Activated CD8-positive, alpha-beta memory T cell treated with anti-CD3 and anti-CD28 coated beads, Interleukin-2, amount 10 ng/mL, durations not matched to agents 7 days and 5 days (primary cell): ENCODE measurements at regions of chr19 and their contacts with region 1.

Region 1: GRCh38 chr19:5803752-5804515 is 933 bp upstream of the NRTN start:
- DNase-seq: peak; percentile 94
- ATAC-seq: peak; percentile 97
- H3K4me3 Mint-ChIP-seq: peak overlapping the region; percentile 64
- H3K27ac Mint-ChIP-seq: no peak overlapping the region
- H3K4me1 Mint-ChIP-seq: peaks cover 19% of the 10 kb centered on the region
- H3K27me3 Mint-ChIP-seq: peaks cover 46% of the 10 kb centered on the region

Region 2: GRCh38 chr19:5690125-5690954 is 113.6 kb before region 1 on chr19 and contains the start of gene RPL36:
- CTCF ChIA-PET with region 1: interaction called, 11 read pairs
- DNase-seq: peak; percentile 99
- ATAC-seq: peak; percentile 63
- H3K4me3 Mint-ChIP-seq: peak within 1 kb of the TSS; percentile 98
- H3K27ac Mint-ChIP-seq: peak within 1 kb of the TSS; percentile 92
- H3K4me1 Mint-ChIP-seq: peaks cover 42% of the 10 kb centered on the region
- H3K27me3 Mint-ChIP-seq: no peaks in the 10 kb centered on the region
- total RNA-seq, gene RPL36: 976 to 1,078 TPM

Region 3: DNA sequence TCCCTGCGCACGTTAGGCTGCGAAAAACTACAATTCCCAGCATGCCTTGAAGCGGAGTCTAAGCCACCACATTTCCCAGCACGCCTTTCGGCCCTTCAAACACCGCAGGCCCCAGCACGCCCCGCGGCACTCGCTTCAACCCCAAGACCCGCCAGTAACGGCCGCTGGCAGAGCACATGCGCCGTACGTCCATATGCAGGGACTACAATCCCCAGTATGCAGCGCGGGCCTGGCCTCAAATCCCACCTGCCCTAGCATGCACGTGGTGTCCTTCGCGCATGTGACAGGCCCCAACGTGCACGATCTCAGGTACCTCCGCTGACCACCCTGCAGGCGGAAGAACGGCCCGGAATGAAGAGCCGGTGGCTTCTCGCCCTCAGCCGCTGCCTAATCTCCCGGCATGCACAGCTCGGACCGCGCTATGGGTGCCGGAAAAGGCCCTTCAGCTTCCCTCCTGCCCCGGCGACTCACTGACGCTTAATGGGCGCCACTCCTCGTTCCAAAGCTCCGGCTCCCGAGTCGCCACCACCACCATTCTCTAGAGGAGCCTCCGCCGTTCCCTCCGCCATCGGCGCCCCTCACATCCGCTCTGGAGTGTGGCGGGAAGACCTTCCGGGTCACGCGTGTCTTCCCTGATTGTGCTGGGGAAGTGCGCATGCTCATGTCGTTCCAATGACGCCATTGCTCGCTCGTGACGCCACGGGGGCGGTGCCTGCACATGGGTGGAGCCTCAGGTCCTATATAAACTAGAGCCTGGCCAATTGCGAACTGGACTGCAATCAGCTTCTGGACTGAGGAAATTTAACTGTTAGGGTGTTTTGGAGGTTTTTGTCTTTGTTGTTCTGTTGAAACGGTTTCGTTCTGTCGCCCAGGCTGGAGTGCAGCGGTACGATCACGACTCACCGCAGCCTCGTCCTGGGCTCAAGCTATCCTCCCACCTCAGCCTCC is 13.1 kb before region 1 on chr19 and contains the start of gene DUS3L:
- CTCF ChIA-PET with region 1: interaction called, 62 read pairs
- DNase-seq: peak; percentile 99
- ATAC-seq: peak; percentile 94
- H3K4me3 Mint-ChIP-seq: peak within 1 kb of the TSS; percentile 89
- H3K27ac Mint-ChIP-seq: peak within 1 kb of the TSS; percentile 99
- H3K4me1 Mint-ChIP-seq: peaks cover 12% of the 10 kb centered on the region
- H3K27me3 Mint-ChIP-seq: no peaks in the 10 kb centered on the region
- total RNA-seq, gene DUS3L: 53.0 to 64.0 TPM

Region 4: DNA sequence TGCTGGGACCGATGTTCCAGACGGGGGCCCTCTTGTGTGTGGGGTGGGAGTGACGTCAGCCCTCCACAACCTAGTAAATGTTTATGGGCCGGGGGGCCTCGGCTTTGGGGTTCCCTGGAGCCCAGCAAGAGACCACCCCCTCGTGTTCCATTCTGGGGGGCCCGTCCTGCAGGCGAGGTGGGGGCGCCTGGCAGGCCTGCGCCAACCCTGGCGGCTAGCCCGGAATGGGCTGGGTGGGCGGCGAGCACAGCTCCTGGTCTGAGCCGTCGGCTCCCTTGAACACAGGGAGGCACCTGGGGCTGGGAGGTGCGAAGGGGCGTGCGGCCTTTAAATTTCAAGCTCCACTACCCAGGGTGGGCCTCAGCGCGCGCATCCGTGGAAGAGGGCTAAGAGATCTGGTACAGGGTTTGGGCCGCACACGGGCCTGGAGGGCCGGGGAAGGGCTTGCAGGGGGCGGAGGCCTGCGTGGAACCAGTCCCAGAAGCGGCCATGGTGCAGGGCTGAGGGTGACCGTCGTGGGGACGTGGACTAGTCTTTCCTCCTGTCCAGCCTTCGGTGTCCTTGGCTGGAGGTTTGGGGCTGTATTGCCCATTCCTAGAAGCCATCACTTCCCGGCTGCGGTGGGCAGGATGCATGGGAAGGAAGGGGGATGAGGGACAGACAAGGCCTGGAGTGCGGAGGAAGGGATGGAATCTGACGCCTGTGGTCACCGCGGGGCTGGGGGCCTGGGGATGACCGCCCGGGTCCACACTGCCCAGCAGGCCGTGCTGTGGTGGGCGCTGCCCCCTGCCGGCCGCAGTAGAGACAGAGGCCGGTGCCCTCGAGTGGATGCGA is 88.2 kb after region 1 on chr19:
- CTCF ChIA-PET with region 1: interaction called, 19 read pairs
- DNase-seq: no peak
- ATAC-seq: peak; percentile 60
- H3K4me3 Mint-ChIP-seq: no peak overlapping the region
- H3K27ac Mint-ChIP-seq: no peak overlapping the region
- H3K4me1 Mint-ChIP-seq: no peaks in the 10 kb centered on the region
- H3K27me3 Mint-ChIP-seq: peaks cover 3% of the 10 kb centered on the region

Region 5: DNA sequence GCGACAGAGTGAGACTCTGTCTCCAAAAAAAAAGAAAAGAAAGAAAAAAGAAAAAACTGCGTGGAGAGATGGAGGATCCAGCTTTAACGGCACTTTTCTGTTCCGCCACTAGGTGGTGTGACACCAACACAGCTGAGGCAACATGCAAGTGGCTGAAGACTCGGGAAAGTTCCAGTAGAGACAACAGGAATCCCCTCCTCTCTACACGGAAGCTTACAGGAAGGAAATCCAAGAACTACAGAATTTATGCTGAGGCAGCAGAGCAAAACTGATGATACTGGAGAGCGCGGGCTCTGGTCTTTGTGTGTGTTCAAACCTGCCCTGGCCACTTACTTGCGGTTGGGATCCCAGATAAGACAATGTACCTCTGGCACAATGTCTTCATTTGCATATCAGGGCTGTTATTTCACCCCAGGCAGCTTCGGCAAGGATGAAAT is 164.1 kb after region 1 on chr19:
- CTCF ChIA-PET with region 1: interaction called, 13 read pairs
- DNase-seq: peak; percentile 74
- ATAC-seq: peak; percentile 82
- H3K4me3 Mint-ChIP-seq: no peak overlapping the region
- H3K27ac Mint-ChIP-seq: peak overlapping the region; percentile 58
- H3K4me1 Mint-ChIP-seq: peaks cover 67% of the 10 kb centered on the region
- H3K27me3 Mint-ChIP-seq: no peaks in the 10 kb centered on the region

Region 6: GRCh38 chr19:5987077-5987818 is 183.3 kb after region 1 on chr19:
- CTCF ChIA-PET with region 1: interaction called, 22 read pairs
- DNase-seq: peak; percentile 82
- ATAC-seq: peak; percentile 22
- H3K4me3 Mint-ChIP-seq: peak overlapping the region; percentile 64
- H3K27ac Mint-ChIP-seq: peak overlapping the region; percentile 72
- H3K4me1 Mint-ChIP-seq: peaks cover 46% of the 10 kb centered on the region
- H3K27me3 Mint-ChIP-seq: no peaks in the 10 kb centered on the region